H1 (cell line): ENCODE measurements at regions of chr5 and their contacts with region 1.

Region 1: DNA sequence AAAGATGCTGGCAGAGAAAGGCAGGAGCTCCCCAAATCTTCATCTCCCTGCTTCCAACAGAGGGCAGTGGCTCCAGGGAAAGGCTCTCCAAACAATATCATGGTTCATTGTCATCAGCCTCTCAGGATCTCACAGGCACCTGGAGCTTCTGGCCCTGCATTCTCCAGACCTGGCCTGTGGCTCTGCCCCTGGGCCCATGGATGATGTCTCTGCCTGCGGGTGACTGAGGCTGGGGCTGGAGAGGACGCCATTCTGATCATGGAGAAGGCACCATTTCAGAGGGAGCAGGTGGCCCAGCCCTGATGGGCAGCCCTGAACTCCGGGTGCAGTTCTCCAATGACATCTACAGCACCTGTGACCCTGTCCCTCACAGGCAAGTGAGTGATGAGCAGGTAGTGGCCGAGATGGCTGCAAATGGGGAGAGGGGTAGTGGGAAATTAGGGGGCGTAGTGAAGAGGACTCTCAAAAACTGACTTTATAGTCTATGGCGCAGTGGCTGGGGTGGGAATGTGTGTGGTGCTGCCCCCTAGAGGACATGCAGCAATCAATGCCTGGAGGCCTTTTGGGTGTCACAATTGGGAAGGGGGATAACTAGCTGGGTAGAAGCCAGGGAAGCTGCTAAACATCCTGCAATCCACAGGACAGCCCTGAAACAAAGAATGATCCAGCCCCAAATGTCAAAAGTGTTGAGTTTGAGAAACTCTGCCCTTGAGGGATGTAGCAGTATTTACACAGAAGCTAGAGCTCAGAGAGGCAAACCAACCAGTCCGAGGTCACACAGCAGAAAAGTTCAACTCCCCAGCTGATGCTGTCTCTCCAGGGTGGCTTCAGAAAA is 3.2 kb downstream of the SH3PXD2B start:
- DNase-seq: peak in 1 of 2 experiments; percentile 81
- H3K4me3 ChIP-seq: no peak overlapping the region
- H3K27ac ChIP-seq: no peak overlapping the region
- H3K4me1 ChIP-seq: peaks cover 13 to 25% (median 21%) of the 10 kb centered on the region in 4 experiments
- H3K27me3 ChIP-seq: no peaks in the 10 kb centered on the region
- CTCF ChIP-seq: peak in 2 of 3 experiments; percentile 72 to 93; a peak in 3 of 4 replicates
- EP300 ChIP-seq: no peak
- POLR2A ChIP-seq: peak in 1 of 2 experiments; percentile 7; a peak in 1 of 3 replicates
- RAD21 ChIP-seq: peak; percentile 51 to 55

Region 2: GRCh38 chr5:172194985-172195774 is 255.9 kb before region 1 on chr5:
- CTCF ChIA-PET with region 1: no interaction called
- POLR2A ChIA-PET with region 1: no interaction called
- DNase-seq: no peak
- H3K4me3 ChIP-seq: no peak overlapping the region
- H3K27ac ChIP-seq: no peak overlapping the region
- H3K4me1 ChIP-seq: no peaks in the 10 kb centered on the region; a peak in 1 of 7 replicates
- H3K27me3 ChIP-seq: no peaks in the 10 kb centered on the region
- CTCF ChIP-seq: no peak
- EP300 ChIP-seq: no peak
- POLR2A ChIP-seq: no peak
- RAD21 ChIP-seq: no peak

Region 3: DNA sequence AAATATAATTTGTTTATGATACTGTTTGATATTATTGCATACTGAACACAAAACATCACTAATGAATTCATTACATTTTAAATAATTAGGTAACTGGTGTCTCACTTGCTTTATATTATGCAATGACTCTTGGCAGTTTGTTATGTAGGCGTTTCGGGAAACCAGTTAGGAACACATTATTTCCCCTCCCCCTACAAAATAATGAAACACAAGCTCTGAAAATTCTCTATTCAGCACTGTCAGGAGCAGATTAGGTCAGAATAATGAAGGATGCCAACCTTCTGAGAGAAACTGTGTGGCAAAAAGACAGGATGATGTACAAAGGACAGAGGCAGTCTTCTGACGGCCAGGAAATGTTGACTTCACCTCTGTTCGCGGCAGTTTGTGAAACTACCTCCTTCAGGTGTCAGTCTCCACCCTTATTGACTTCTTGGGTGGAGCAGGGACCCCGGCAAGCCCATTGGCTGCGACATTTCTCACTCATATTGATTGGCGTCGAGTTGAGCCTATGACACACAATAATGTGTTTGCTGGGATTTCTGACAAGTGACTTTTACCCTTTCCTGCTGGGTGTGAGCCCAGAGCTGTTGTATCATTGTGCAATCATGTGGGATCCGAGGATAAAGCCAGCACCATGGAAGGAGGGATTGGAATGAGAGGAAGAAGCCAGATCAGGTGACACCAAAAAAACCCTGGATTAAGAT is 30.7 kb before region 1 on chr5:
- CTCF ChIA-PET with region 1: interaction called, 36 read pairs
- POLR2A ChIA-PET with region 1: interaction called, 5 read pairs
- DNase-seq: peak in 1 of 2 experiments; percentile 59
- H3K4me3 ChIP-seq: no peak overlapping the region
- H3K27ac ChIP-seq: no peak overlapping the region
- H3K4me1 ChIP-seq: no peaks in the 10 kb centered on the region; a peak in 2 of 7 replicates
- H3K27me3 ChIP-seq: no peaks in the 10 kb centered on the region
- CTCF ChIP-seq: no peak
- EP300 ChIP-seq: no peak
- POLR2A ChIP-seq: no peak
- RAD21 ChIP-seq: no peak

Region 4: DNA sequence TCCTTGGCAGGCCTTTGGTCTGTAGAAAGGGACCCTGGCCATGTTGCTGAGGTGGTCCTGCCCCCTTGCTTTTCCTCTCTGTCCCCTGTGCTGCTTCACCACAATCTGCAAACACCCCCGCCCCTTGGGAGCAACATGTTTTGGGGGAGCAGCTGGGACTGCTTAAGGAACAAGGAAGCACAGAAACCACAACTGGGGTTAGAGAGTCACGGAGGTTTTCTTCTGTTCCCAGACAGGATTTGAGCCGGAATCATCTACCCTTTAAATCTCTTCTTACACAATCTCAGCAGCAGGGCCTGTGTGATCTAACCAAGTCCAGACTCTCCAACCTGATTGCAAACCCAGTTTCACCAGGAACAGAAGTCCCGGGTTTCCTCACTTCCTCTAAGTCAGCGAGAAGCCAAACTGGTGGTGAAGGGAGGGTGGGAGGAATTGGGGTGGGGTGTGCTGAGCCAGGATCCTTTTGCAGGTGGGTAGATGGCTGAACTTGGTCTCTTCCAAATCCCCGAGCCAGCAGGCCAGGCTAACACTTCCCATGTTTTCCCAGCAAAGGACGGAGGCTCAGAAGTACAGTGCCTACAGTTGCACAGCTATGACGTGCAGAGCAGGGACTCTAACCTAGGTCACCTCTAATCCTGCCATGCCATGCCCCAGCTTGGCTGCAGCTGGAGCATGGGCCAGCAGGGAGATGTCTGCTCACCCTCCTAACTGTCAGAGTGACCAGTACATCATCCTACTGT is 21.7 kb before region 1 on chr5:
- CTCF ChIA-PET with region 1: interaction called, 94 read pairs
- POLR2A ChIA-PET with region 1: interaction called, 4 read pairs
- DNase-seq: no peak
- H3K4me3 ChIP-seq: no peak overlapping the region
- H3K27ac ChIP-seq: no peak overlapping the region
- H3K4me1 ChIP-seq: peaks cover 0 to 3% (median 0%) of the 10 kb centered on the region in 4 experiments; a peak in 1 of 7 replicates
- H3K27me3 ChIP-seq: no peaks in the 10 kb centered on the region
- CTCF ChIP-seq: no peak
- EP300 ChIP-seq: no peak
- POLR2A ChIP-seq: no peak
- RAD21 ChIP-seq: no peak

Region 5: GRCh38 chr5:172437445-172438308 is 13.4 kb before region 1 on chr5:
- CTCF ChIA-PET with region 1: interaction called, 94 read pairs
- POLR2A ChIA-PET with region 1: interaction called, 4 read pairs
- DNase-seq: no peak
- H3K4me3 ChIP-seq: no peak overlapping the region
- H3K27ac ChIP-seq: no peak overlapping the region
- H3K4me1 ChIP-seq: no peaks in the 10 kb centered on the region; a peak in 1 of 7 replicates
- H3K27me3 ChIP-seq: no peaks in the 10 kb centered on the region
- CTCF ChIP-seq: no peak
- EP300 ChIP-seq: no peak
- POLR2A ChIP-seq: no peak
- RAD21 ChIP-seq: no peak

Region 6: DNA sequence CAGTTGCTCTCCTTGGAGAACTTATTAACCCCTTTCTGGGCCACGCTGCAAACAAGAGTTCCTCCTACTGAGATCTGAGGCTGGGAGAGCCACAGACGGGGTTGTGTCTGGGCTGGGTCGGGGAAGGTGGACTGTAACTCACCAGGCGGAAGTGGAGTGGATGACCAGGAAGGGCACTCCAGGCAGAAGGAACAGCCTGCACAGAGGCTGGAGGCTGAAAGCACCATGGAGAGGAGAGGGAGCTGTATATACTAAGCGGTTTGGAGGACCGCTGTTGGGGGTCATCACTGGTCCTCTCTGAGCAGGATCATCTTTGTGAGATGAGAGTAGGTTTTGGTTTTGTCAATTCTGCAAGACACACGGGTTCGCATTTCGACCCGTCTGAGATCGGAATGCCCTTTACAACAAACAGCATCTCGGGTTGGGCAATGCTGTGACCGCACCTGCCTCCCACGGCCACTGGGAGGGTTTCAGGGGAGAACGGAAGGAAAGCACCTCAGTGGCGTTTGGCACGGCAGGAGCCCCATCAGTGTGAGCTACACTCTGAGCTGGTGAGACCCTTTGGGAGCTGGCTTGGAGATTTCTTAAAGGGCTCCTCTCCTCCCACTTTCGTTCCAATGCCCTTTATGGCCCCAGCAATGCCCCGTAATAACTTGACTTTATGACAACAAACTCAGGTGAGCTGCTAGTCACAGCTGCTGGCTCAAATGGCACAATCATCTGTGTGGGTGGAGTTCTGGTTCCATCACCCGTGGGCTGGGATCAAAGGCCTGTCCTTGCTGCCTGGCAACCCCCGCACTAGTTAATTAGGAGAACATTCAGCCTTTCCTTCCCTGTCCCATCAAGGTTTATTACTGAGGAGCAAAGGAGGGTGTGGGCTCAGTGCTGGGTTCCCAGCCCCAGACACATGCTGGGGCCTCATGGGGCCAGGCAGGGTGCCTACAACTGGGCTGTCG is 171.3 kb after region 1 on chr5:
- CTCF ChIA-PET with region 1: no interaction called
- POLR2A ChIA-PET with region 1: no interaction called
- DNase-seq: no peak
- H3K4me3 ChIP-seq: no peak overlapping the region
- H3K27ac ChIP-seq: no peak overlapping the region
- H3K4me1 ChIP-seq: peaks cover 4 to 22% (median 6%) of the 10 kb centered on the region in 4 experiments
- H3K27me3 ChIP-seq: no peaks in the 10 kb centered on the region; a peak in 1 of 7 replicates
- CTCF ChIP-seq: peak in 2 of 3 experiments; percentile 49 to 51; a peak in 2 of 4 replicates
- EP300 ChIP-seq: no peak
- POLR2A ChIP-seq: no peak
- RAD21 ChIP-seq: peak in 1 of 2 experiments; percentile 32; a peak in 1 of 4 replicates